ENCODE measurements at regions of chr1 and their contacts with region 1.

Region 1: GRCh38 chr1:229558571-229559335 is at the start of gene ABCB10:
- DNase-seq: peak; percentile 94
- ATAC-seq: peak; percentile 83
- H3K4me3 Mint-ChIP-seq: peak within 1 kb of the TSS; percentile 86
- H3K27ac Mint-ChIP-seq: peak within 1 kb of the TSS; percentile 89
- H3K4me1 Mint-ChIP-seq: peaks cover 34% of the 10 kb centered on the region
- H3K27me3 Mint-ChIP-seq: no peaks in the 10 kb centered on the region
- total RNA-seq, gene ABCB10: 18.4 to 30.1 TPM

Region 2: GRCh38 chr1:229341774-229342655 is 216.7 kb before region 1 on chr1:
- CTCF ChIA-PET with region 1: no interaction called
- POLR2A ChIA-PET with region 1: interaction called, 6 read pairs
- intact Hi-C with region 1: loop called (anchors 1 to 2 kb)
- DNase-seq: peak; percentile 85
- ATAC-seq: peak; percentile 76
- H3K4me3 Mint-ChIP-seq: peak overlapping the region; percentile 88
- H3K27ac Mint-ChIP-seq: peak overlapping the region; percentile 77
- H3K4me1 Mint-ChIP-seq: peaks cover 45% of the 10 kb centered on the region
- H3K27me3 Mint-ChIP-seq: peaks cover 9% of the 10 kb centered on the region

Region 3: GRCh38 chr1:229537894-229538293 is 20.9 kb before region 1 on chr1:
- CTCF ChIA-PET with region 1: interaction called, 4 read pairs
- POLR2A ChIA-PET with region 1: no interaction called
- intact Hi-C with region 1: loop called in 1 of 2 experiments (anchors 1 kb)
- DNase-seq: no peak
- ATAC-seq: no peak
- H3K4me3 Mint-ChIP-seq: no peak overlapping the region
- H3K27ac Mint-ChIP-seq: no peak overlapping the region
- H3K4me1 Mint-ChIP-seq: peaks cover 13% of the 10 kb centered on the region
- H3K27me3 Mint-ChIP-seq: no peaks in the 10 kb centered on the region

Region 4: DNA sequence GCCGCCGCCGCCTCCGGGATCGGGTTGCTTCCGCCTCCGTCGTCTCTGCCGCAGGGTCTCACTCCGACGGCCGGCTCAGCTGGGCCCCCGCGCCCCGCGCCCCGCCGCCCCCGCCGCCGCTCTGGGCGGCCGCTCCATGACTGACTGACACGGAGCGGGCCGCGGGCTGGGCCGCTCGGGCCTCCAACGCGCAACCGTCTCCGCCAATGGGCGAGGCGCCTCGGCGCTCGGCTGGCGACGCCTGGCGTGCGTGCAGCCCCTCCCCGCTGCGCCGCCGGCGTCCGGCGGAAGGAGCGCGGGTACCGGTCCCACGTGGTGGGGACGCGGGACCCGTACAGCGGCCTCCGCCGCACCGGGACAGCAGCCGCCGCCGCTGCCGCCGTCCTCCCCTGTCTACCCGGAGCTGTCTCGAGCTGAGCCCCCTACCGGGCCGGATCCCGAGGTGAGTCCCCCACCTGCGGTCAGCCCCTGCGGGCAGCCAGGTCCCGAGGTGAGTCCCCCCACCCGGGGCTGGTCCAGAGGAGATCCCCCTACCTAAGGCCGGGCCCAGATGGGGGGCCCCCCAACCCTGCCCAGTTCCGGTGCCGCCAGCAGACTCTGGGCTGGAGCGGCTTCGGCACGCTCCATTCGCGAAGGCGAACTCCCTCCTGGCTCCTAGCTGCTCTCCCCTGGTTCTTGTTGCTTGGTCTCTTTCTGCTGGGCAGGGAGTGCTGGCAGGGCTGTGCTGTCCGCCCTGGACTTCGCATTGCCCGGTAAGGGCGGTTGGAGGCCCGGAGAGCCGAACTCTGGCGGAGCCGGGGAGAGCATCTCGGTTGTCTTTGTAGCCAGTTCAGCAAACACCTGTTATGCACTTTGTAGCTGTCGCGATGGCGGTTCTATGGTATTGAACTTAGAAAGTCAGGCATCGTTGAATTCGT is 67.4 kb after region 1 on chr1 and contains the starts of genes TAF5L and URB2:
- CTCF ChIA-PET with region 1: interaction called, 5 read pairs
- POLR2A ChIA-PET with region 1: interaction called, 4 read pairs
- intact Hi-C with region 1: loop called (anchors 1 kb)
- DNase-seq: peak; percentile 93
- ATAC-seq: peak; percentile 92
- H3K4me3 Mint-ChIP-seq: peak within 1 kb of the TSS; percentile 89
- H3K27ac Mint-ChIP-seq: peak within 1 kb of the TSS; percentile 96
- H3K4me1 Mint-ChIP-seq: peaks cover 57% of the 10 kb centered on the region
- H3K27me3 Mint-ChIP-seq: no peaks in the 10 kb centered on the region
- total RNA-seq, gene TAF5L: 16.5 to 17.6 TPM
- total RNA-seq, gene URB2: 13.9 to 16.5 TPM

Region 5: DNA sequence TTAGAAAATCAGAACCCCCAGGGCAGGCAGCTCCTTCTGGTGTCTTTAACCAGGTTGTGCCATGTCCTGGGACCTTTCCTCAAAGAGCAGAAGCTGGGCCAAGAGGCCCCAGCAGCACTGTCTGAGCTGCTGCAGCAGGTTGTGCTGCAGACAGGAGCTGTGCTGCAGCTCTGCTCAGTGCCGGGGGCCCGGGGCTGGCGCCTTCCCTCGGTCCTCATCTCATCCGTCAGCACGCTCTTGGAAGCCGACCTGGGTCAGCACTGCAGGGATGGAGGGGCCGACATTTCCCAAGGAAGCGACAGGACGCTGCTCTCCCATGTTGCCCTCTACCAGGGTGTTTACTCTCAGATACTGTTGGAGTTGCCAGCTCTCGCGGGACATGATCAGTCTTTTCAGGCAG is 79.0 kb after region 1 on chr1:
- CTCF ChIA-PET with region 1: no interaction called
- POLR2A ChIA-PET with region 1: no interaction called
- intact Hi-C with region 1: no loop called
- DNase-seq: no peak
- ATAC-seq: no peak
- H3K4me3 Mint-ChIP-seq: no peak overlapping the region
- H3K27ac Mint-ChIP-seq: no peak overlapping the region
- H3K4me1 Mint-ChIP-seq: no peaks in the 10 kb centered on the region
- H3K27me3 Mint-ChIP-seq: no peaks in the 10 kb centered on the region

Region 6: GRCh38 chr1:230104395-230105244 is 545.9 kb after region 1 on chr1:
- CTCF ChIA-PET with region 1: no interaction called
- POLR2A ChIA-PET with region 1: no interaction called
- intact Hi-C with region 1: loop called in 1 of 2 experiments (anchors 5 kb)
- DNase-seq: peak; percentile 95
- ATAC-seq: peak; percentile 78
- H3K4me3 Mint-ChIP-seq: peak overlapping the region; percentile 44
- H3K27ac Mint-ChIP-seq: peak overlapping the region; percentile 92
- H3K4me1 Mint-ChIP-seq: peaks cover 86% of the 10 kb centered on the region
- H3K27me3 Mint-ChIP-seq: no peaks in the 10 kb centered on the region